Activated CD4-positive, alpha-beta memory T cell treated with anti-CD3 and anti-CD28 coated beads for 36 hours (primary cell): ENCODE measurements at regions of chr21 and their contacts with region 1.

Region 1: DNA sequence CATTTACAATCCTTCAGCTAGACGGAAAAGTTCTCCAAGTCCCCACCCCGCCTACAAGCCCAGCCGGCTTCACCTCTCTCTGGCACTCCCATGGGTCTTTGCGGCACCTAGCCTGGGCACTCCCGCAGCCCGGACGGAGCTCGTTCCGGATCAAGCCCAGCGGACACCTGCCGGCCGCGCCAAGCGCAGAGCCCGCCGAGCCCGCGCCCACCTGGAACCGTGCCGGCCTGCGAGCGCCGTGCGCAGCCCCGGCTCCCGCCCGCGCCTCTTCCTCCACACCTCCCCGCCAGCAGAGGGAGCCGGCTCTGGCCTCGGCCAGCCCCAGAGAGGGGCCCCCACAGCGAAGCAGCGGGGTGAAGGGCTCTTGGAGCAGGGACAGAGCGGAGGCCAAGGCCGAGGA is 50.0 kb upstream of the KRTAP19-8 start:
- DNase-seq: no peak
- H3K4me3 Mint-ChIP-seq: no peak overlapping the region
- H3K27ac Mint-ChIP-seq: no peak overlapping the region
- H3K4me1 Mint-ChIP-seq: peaks cover 7% of the 10 kb centered on the region
- H3K27me3 Mint-ChIP-seq: peaks cover 9% of the 10 kb centered on the region

Region 2: DNA sequence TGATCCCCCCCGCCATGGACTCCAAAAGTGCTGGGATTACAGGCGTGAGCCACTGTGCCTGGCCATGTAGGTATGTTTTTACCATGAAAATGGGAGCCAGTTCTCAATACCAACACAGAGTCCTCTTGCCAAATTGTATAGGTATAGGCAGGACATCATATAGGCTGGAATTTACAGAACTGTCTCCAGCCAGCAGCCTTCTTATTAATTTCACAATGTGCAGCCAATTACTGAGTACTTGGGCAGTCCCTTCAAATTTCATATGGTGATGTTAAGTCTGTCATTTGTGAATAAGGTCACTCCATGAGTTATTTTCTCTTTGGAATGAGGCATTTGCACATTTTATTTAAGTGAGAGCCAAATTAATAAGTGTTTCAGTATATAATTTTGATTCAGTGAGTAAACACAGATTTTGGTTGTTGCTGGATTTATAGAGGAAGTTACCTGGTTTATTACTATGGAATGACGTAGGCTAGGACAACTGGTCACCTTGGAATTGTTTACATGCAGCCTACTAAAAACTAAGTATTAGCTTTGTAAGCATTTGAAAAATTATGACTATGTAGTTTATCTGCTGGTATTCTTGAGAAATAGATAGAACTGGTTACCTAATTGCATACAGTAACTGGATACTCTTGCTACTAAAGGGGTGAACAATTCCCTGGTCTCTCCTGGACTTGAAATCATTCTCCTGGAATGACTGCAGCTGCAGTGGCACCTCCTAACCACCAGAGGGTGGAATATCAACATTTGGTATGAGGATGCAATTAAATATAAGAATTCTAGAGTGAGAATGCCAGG is 747.7 kb before region 1 on chr21:
- CTCF ChIA-PET with region 1: interaction called, 5 read pairs
- POLR2A ChIA-PET with region 1: no interaction called
- intact Hi-C with region 1: loop called (anchors 1 kb)
- DNase-seq: peak; percentile 37
- H3K4me3 Mint-ChIP-seq: no peak overlapping the region
- H3K27ac Mint-ChIP-seq: no peak overlapping the region
- H3K4me1 Mint-ChIP-seq: no peaks in the 10 kb centered on the region
- H3K27me3 Mint-ChIP-seq: peaks cover 3% of the 10 kb centered on the region

Region 3: GRCh38 chr21:30502041-30502440 is 586.3 kb before region 1 on chr21 and contains the start of gene KRTAP19-5:
- CTCF ChIA-PET with region 1: interaction called, 3 read pairs
- POLR2A ChIA-PET with region 1: no interaction called
- intact Hi-C with region 1: loop called (anchors 1 kb)
- DNase-seq: no peak
- H3K4me3 Mint-ChIP-seq: no peak within 1 kb of the TSS
- H3K27ac Mint-ChIP-seq: no peak within 1 kb of the TSS
- H3K4me1 Mint-ChIP-seq: no peaks in the 10 kb centered on the region
- H3K27me3 Mint-ChIP-seq: peaks cover 3% of the 10 kb centered on the region
- total RNA-seq, gene KRTAP19-5: not detected

Region 4: GRCh38 chr21:30718239-30718909 is 369.9 kb before region 1 on chr21 and contains the start of gene KRTAP21-3:
- CTCF ChIA-PET with region 1: interaction called, 6 read pairs
- POLR2A ChIA-PET with region 1: no interaction called
- intact Hi-C with region 1: loop called (anchors 5 kb)
- DNase-seq: peak; percentile 38
- H3K4me3 Mint-ChIP-seq: no peak within 1 kb of the TSS
- H3K27ac Mint-ChIP-seq: peak within 1 kb of the TSS; percentile 28
- H3K4me1 Mint-ChIP-seq: peaks cover 23% of the 10 kb centered on the region
- H3K27me3 Mint-ChIP-seq: no peaks in the 10 kb centered on the region
- total RNA-seq, gene KRTAP21-3: not detected

Region 5: DNA sequence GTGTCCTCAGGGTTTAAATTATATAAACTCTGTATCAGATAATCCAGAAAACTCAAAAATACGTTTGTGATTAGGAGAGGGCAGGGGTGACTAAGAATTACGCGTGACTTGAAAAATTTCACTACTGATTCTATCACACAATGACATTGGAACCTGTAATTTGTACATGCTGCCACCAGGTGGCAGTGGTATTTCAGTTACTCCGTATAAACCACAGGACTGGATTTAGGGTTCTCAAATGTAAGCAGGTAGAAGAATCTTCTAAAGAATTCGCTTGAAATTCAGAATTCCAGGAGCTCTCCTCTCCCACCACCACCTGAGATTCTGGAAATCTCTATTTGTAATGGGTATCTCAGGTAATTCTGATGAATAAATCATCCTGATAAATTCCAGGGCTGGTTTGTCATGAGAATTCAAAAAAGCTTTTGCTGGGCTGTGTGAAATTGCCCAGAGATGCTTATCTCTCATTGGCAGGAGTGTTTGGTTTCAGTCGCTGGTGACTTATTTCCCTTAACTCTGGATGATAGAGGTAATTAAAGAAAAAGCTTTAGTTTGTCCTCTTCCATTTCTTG is 257.0 kb before region 1 on chr21:
- CTCF ChIA-PET with region 1: interaction called, 43 read pairs
- POLR2A ChIA-PET with region 1: no interaction called
- intact Hi-C with region 1: loop called (anchors 1 kb)
- DNase-seq: peak; percentile 56
- H3K4me3 Mint-ChIP-seq: no peak overlapping the region
- H3K27ac Mint-ChIP-seq: no peak overlapping the region
- H3K4me1 Mint-ChIP-seq: no peaks in the 10 kb centered on the region
- H3K27me3 Mint-ChIP-seq: peaks cover 6% of the 10 kb centered on the region

Region 6: GRCh38 chr21:30839304-30839703 is 249.0 kb before region 1 on chr21:
- CTCF ChIA-PET with region 1: interaction called, 13 read pairs
- POLR2A ChIA-PET with region 1: no interaction called
- intact Hi-C with region 1: loop called (anchors 2 kb)
- DNase-seq: peak; percentile 51
- H3K4me3 Mint-ChIP-seq: no peak overlapping the region
- H3K27ac Mint-ChIP-seq: no peak overlapping the region
- H3K4me1 Mint-ChIP-seq: no peaks in the 10 kb centered on the region
- H3K27me3 Mint-ChIP-seq: peaks cover 10% of the 10 kb centered on the region

Region 7: GRCh38 chr21:30981403-30981802 is 106.9 kb before region 1 on chr21:
- CTCF ChIA-PET with region 1: no interaction called
- POLR2A ChIA-PET with region 1: no interaction called
- intact Hi-C with region 1: loop called (anchors 10 kb)
- DNase-seq: no peak
- H3K4me3 Mint-ChIP-seq: no peak overlapping the region
- H3K27ac Mint-ChIP-seq: no peak overlapping the region
- H3K4me1 Mint-ChIP-seq: peaks cover 11% of the 10 kb centered on the region
- H3K27me3 Mint-ChIP-seq: no peaks in the 10 kb centered on the region

Region 8: DNA sequence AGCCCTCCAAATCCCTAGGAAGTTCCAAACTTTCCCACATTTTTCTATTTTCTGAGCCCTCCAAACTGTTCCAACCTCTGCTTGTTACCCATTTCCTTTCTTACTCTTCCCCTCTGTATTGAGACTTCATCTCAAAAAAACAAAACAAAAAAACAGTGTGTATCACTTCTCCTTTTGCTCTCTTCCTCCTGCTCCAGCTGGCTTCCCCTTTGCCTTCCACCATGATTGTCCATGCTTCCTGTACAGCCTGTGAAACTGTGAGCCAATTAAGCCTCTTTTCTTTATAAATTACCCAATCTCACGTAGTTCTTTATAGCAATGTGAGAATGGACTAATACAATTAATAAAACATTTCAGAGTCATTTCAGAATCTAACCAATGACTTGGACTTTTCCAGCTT is 19.6 kb after region 1 on chr21:
- CTCF ChIA-PET with region 1: no interaction called
- POLR2A ChIA-PET with region 1: no interaction called
- intact Hi-C with region 1: no loop called
- DNase-seq: no peak
- H3K4me3 Mint-ChIP-seq: no peak overlapping the region
- H3K27ac Mint-ChIP-seq: no peak overlapping the region
- H3K4me1 Mint-ChIP-seq: peaks cover 32% of the 10 kb centered on the region
- H3K27me3 Mint-ChIP-seq: no peaks in the 10 kb centered on the region